ENCODE measurements at regions of chr3 and their contacts with region 1.

Region 1: GRCh38 chr3:186732169-186732766 is 15.1 kb downstream of the KNG1 start:
- DNase-seq: no peak
- ATAC-seq: no peak
- H3K4me3 ChIP-seq: no peak overlapping the region
- H3K27ac ChIP-seq: no peak overlapping the region
- H3K4me1 ChIP-seq: peaks cover 0 to 37% (median 11%) of the 10 kb centered on the region in 4 donors
- H3K27me3 ChIP-seq: no peaks in the 10 kb centered on the region
- CTCF ChIP-seq: no peak
- POLR2A ChIP-seq: no peak

Region 2: DNA sequence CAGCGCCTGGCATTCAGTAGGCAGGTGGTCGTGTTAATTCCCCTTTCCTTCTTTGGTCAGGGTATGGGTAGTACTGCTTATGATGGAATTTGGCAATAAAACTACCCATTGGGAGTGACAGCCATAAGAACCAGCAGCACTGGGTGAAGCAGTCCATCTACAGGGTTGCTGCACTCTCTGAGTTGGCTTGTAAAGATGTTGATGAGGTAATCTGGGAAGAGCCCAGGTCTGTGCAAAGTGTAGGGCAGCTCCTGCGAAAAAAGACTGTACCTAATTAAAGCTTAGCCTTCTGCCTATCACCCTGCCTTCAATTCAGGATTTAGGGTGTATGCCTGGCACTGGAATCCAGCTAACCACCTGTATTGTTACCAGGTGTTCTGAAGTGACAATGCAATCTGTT is 96.7 kb before region 1 on chr3:
- intact Hi-C with region 1: loop called in 1 of 2 experiments (anchors 10 kb)
- DNase-seq: no peak
- ATAC-seq: peak; percentile 41 to 62 (median 50)
- H3K4me3 ChIP-seq: no peak overlapping the region
- H3K27ac ChIP-seq: peak overlapping the region in 2 of 3 donors; percentile 19 to 81
- H3K4me1 ChIP-seq: peaks cover 0 to 63% (median 7%) of the 10 kb centered on the region in 4 donors
- H3K27me3 ChIP-seq: no peaks in the 10 kb centered on the region
- CTCF ChIP-seq: no peak
- POLR2A ChIP-seq: no peak